PC-9 (cell line): ENCODE measurements at regions of chr11 and their contacts with region 1.

Region 1: DNA sequence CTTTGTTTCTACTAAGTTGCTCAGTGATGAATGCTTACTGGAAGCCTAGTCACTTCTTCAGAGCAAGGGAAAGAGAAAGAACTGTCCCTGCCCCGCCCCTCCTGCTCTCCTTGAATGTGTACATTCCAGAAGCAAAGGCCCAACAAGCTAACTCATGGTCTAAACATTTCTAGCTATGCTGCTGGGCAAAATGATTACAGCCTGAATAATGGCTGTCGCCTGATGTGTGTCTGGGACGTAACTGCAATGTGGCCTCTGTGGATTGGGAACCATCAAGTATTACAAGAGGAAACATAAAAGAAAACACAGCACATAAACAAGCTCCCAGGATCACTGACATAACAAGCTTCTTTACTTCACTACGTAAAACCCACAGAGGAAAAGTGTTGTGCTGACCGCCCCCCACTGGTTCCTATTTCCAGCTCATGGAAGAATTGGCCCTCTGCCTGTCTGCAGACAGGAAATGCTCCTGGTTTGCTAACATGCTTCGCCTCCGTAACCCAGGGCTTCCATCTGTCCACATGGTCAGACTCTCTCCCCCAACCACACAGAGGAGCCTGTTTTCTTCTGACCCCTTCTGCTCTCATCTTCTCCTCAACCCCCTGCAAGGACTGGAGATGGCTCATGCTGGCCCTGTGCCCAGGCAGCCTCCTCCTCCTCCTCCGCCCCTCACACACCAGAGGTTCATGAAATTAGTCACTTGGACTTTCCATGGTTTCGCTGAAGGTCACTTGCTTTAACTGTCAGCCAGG is 187.2 kb downstream of the MAML2 start:
- DNase-seq: peak; percentile 80 to 95
- H3K4me3 ChIP-seq: no peak overlapping the region
- H3K27ac ChIP-seq: peak overlapping the region; percentile 73
- H3K4me1 ChIP-seq: peaks cover 45% of the 10 kb centered on the region
- H3K27me3 ChIP-seq: no peaks in the 10 kb centered on the region
- CTCF ChIP-seq: no peak; the same call in 1 of the 2 replicates

Region 2: DNA sequence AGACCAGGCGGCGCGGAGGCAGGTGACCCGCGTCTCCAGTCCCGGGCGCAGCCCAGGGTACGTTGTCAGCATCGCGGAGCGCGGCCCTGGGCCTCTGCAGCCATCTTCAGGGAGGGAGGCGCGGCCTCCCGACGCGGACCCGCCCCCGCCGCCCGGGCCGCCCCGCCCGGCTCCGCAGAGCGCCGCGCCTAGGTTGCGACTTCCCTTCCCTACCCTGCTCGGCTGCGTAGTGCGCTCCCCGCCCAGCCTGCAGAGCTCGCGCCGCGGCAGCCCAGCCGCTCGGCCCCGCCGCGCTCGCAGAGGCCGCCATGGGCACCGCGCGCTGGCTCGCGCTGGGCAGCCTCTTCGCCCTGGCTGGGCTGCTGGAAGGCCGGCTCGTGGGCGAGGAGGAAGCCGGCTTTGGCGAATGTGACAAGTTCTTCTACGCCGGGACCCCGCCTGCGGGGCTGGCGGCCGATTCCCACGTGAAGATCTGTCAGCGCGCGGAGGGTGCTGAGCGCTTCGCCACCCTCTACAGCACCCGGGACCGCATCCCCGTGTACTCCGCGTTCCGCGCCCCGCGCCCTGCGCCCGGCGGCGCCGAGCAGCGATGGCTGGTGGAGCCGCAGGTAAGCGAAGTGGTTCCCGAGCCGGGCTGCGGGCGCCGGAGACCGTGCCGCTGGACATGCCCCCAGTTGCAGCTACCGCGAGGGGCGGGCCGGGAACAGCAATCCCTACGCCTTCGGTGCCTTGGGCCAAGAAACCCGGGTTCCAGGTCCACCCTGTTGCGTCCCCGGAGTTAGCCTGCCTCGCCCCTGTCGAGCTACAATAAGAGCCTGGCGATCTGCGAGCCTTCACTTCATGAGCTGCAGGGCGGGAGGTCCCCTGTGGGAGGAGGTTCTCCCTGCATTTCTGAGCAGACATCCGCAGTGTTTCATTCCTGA is 1065.9 kb before region 1 on chr11 and contains the start of gene ENDOD1:
- CTCF ChIA-PET with region 1: interaction called, 14 read pairs
- POLR2A ChIA-PET with region 1: no interaction called
- intact Hi-C with region 1: no loop called
- DNase-seq: peak; percentile 68 to 81
- H3K4me3 ChIP-seq: peak within 1 kb of the TSS; percentile 93
- H3K27ac ChIP-seq: peak within 1 kb of the TSS; percentile 24; the same call in 1 of the 2 replicates
- H3K4me1 ChIP-seq: peaks cover 41% of the 10 kb centered on the region
- H3K27me3 ChIP-seq: no peaks in the 10 kb centered on the region
- CTCF ChIP-seq: peak; percentile 27; the same call in 1 of the 2 replicates
- total RNA-seq, gene ENDOD1: 8.0 and 8.1 TPM in 2 replicates

Region 3: DNA sequence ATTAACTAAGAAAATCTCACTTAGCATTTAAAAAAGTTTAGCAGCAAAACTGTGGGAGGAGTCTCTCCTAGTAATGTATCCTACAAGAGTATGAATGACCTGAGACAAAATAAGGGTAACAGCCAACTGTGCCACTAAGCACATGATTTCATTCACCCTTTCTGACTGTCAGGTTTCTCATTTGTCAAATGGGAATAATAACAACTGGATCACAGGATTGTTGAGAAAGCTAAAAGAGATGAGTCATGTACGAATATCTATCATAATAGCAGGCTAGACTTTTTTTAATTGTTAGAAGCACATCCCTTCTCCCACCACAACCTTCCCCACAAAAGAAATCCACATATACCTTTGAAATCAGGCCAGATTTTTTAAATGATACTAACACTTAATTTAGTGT is 271.4 kb before region 1 on chr11:
- CTCF ChIA-PET with region 1: no interaction called
- POLR2A ChIA-PET with region 1: interaction called, 12 read pairs
- intact Hi-C with region 1: no loop called
- DNase-seq: peak in 1 of 2 experiments; percentile 32
- H3K4me3 ChIP-seq: no peak overlapping the region
- H3K27ac ChIP-seq: 0 out of 2 replicates have a peak overlapping the region, but pooled peaks have one; percentile 4
- H3K4me1 ChIP-seq: no peaks in the 10 kb centered on the region; the same call in 1 of the 2 replicates
- H3K27me3 ChIP-seq: no peaks in the 10 kb centered on the region
- CTCF ChIP-seq: no peak

Region 4: DNA sequence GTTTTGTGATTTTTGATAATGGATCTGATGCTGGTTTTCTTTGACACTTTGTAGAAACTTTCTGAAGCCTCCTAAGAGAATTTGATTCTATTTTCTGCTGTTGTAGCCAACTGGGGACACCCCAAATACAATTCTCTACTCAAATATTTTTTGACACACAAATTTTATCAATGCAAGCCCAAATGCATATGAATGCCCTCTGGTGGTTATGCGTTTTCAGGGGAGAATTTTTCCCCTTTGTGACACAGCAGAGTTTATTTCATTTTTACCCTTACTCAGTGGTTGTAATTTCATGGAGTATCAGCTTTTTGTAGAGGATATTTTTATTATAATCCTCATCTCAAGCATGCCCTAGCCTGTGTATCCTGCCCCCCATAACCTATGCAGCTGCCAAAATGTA is 187.2 kb before region 1 on chr11:
- CTCF ChIA-PET with region 1: no interaction called
- POLR2A ChIA-PET with region 1: no interaction called
- intact Hi-C with region 1: no loop called
- DNase-seq: peak in 1 of 2 experiments; percentile 32
- H3K4me3 ChIP-seq: no peak overlapping the region
- H3K27ac ChIP-seq: no peak overlapping the region
- H3K4me1 ChIP-seq: no peaks in the 10 kb centered on the region
- H3K27me3 ChIP-seq: no peaks in the 10 kb centered on the region
- CTCF ChIP-seq: peak; percentile 56

Region 5: GRCh38 chr11:96306933-96307775 is 151.4 kb after region 1 on chr11:
- CTCF ChIA-PET with region 1: no interaction called
- POLR2A ChIA-PET with region 1: no interaction called
- intact Hi-C with region 1: loop called (anchors 2 kb)
- DNase-seq: peak; percentile 84 to 100
- H3K4me3 ChIP-seq: peak overlapping the region; percentile 43
- H3K27ac ChIP-seq: peak overlapping the region; percentile 96
- H3K4me1 ChIP-seq: peaks cover 99% of the 10 kb centered on the region
- H3K27me3 ChIP-seq: no peaks in the 10 kb centered on the region
- CTCF ChIP-seq: no peak